ENCODE measurements at regions of chr6 and their contacts with region 1.

Region 1: DNA sequence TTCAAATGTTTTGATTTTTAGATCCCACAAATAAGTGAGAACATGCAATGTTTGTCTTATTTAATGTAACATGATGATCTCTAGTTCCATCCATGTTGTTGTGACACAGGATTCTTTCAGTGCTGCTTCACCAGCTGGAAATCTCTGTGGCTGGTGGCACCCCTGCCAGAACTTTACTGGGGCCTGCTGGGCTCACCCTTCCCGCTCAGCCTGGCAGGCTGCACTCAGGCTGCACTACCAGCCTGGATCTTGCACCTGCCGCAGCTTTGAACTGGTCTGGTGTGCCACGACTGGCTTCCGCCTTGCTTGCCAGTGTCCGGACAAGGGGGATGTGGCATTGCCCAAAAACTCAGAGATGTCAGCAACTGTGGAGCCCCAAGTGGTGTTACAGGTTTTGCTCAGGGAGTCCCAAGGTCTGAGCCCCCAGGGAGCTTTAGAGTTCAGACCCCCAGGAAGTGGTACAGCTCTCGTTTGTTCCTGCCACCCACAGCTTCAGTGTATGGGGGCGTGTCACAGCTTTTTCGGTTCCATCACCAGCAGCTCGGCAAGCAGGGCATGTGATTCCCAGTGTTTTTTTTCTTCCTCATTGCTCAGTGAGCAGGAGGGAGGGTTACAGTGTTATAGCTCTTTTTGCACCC is 72.3 kb upstream of the SYNCRIP start:
- DNase-seq: peak; percentile 11 to 68
- ATAC-seq: peak; percentile 88 to 96
- H3K4me3 ChIP-seq: no peak overlapping the region
- H3K27ac ChIP-seq: peak overlapping the region; percentile 40 to 67 (median 57)
- H3K4me1 ChIP-seq: peaks cover 0 to 3% of the 10 kb centered on the region in 2 donors
- H3K27me3 ChIP-seq: no peaks in the 10 kb centered on the region
- CTCF ChIP-seq: no peak
- POLR2A ChIP-seq: no peak

Region 2: GRCh38 chr6:85685713-85686112 is 29.3 kb before region 1 on chr6:
- in situ Hi-C with region 1: no loop called
- intact Hi-C with region 1: loop called (anchors 2 kb)
- DNase-seq: no peak
- ATAC-seq: no peak
- H3K4me3 ChIP-seq: no peak overlapping the region
- H3K27ac ChIP-seq: peak overlapping the region in 2 of 4 donors; percentile 81 to 84
- H3K4me1 ChIP-seq: peaks cover 14 to 18% of the 10 kb centered on the region in 2 donors
- H3K27me3 ChIP-seq: no peaks in the 10 kb centered on the region
- CTCF ChIP-seq: no peak
- POLR2A ChIP-seq: no peak

Measured in gastrocnemius medialis (tissue), 4 donors.